ENCODE measurements at regions of chr7 and their contacts with region 1.

Region 1: DNA sequence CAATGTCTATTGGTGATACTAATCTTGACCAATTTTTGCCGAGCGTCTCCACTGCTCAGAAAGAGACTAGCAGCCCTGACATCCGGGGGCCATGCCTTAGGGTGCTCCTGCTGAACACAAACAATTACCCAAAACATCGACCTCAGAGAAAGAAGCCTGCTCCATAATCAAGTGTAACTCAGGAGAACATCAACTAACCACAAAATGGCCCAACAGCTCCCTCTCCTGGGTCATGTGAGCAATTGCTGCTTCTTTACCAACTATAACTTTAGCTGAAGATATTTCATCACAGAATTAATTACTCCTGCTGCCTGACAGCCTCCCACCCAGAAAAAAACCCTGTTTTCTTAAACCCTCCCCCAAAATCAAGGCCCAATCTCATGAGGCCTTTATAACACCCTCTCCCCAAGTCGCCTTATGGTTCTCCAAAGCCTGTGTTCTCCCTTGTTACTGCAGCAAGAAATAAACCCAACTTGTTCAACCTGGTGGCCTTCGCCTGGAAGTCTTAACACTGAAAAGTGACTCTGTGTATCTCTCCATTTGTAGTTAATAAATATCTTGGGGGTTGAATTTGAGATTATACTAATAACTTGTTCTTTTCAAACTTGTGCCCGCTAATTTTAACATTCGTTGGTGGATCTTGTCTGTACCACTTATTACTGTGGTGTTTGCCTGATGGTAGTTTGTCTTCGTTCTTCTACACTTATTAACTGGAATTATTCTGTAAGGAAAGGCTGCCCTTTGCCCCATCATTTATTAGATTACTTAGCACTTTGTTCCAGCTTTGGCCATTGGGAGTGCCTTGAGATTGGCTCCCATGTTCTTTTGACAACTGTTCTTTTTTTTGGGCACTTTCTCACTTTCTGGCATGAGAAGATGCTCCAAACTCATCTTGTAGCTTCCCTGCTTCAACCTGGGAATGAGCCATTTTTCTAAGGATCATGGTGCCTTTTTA is 21.2 kb upstream of the RAMP3 start:
- DNase-seq: peak; percentile 90
- H3K4me3 Mint-ChIP-seq: no peak overlapping the region
- H3K27ac Mint-ChIP-seq: no peak overlapping the region
- H3K4me1 Mint-ChIP-seq: peaks cover 10% of the 10 kb centered on the region
- H3K27me3 Mint-ChIP-seq: peaks cover 27% of the 10 kb centered on the region
- CTCF ChIP-seq: peak; percentile 86

Region 2: GRCh38 chr7:44858161-44858560 is 278.2 kb before region 1 on chr7:
- CTCF ChIA-PET with region 1: interaction called, 50 read pairs
- POLR2A ChIA-PET with region 1: interaction called, 5 read pairs
- intact Hi-C with region 1: loop called (anchors 1 kb)
- DNase-seq: no peak
- H3K4me3 Mint-ChIP-seq: no peak overlapping the region
- H3K27ac Mint-ChIP-seq: no peak overlapping the region
- H3K4me1 Mint-ChIP-seq: no peaks in the 10 kb centered on the region
- H3K27me3 Mint-ChIP-seq: no peaks in the 10 kb centered on the region
- CTCF ChIP-seq: no peak

Region 3: DNA sequence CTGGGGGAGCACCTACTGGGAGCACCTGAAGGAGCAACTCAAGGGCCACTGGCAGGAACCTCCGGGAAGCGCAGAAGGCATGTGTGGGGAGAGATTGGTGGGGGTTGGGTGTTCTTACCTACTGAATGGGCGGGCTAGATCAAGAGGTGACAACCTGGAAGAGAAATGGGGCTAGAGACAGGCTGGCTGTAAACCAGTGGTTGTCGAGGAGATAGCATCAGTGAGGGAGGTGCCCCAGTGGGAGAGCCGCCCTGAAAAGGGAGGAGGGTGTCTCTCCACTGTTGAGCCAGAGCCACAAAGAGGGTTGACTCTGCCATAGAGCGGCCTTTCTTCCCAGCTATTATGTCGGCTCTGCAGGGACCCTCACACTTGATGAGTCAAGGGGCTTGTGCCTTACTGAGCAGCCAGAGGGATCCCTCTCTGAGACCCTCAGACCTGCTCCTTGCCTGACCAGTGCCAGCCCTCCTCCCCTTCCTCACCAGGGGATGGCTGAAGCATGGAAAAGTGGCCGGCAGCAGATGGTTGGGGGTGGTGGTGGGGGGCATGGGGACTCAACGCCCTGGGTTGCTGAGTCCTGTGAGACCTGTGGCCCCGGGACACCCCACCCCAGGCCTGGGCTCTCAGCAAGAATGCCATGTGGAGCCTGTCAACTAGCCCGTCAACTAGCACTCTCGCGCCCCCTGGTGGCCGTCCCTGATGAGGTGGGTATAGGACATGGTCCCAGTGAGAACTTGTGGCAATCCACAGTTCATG is 214.6 kb before region 1 on chr7:
- CTCF ChIA-PET with region 1: interaction called, 3 read pairs
- POLR2A ChIA-PET with region 1: no interaction called
- intact Hi-C with region 1: loop called (anchors 5 kb)
- DNase-seq: peak; percentile 81
- H3K4me3 Mint-ChIP-seq: no peak overlapping the region
- H3K27ac Mint-ChIP-seq: no peak overlapping the region
- H3K4me1 Mint-ChIP-seq: no peaks in the 10 kb centered on the region
- H3K27me3 Mint-ChIP-seq: no peaks in the 10 kb centered on the region
- CTCF ChIP-seq: peak; percentile 82

Region 4: DNA sequence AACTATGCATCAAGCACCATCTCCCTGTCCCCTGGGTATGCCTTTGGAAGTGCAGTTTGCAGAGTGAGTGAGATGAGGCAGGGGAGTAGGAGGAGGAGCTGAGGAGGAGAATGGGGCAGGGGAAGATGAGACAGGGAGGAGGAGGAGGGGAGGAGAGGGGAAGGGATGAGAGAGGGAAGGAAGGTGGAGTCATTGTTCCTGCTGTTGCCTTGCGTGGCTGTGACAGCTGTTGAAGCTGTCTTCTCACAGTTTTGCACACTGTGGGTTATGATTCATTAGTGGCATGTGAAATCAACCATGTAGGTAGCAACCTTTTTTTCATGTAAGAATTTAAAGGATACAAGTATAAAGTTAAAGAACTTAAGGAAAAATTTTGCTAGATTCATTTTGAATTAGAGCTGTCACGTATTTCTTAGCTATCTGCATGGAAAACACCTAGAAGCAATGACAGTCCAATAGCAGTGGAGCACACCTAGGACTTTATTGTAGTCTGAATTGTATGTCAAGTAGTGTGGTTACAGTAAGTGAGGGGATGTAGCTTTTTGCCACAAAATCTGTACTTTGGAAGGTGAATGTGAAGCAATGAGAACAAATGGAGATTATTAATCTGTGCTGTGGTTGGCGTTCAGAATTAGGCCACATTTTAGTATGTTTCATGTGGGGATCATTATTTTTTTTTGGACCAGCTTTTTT is 114.6 kb before region 1 on chr7:
- CTCF ChIA-PET with region 1: no interaction called
- POLR2A ChIA-PET with region 1: no interaction called
- intact Hi-C with region 1: no loop called
- DNase-seq: no peak
- H3K4me3 Mint-ChIP-seq: no peak overlapping the region
- H3K27ac Mint-ChIP-seq: peak overlapping the region; percentile 28
- H3K4me1 Mint-ChIP-seq: peaks cover 8% of the 10 kb centered on the region
- H3K27me3 Mint-ChIP-seq: no peaks in the 10 kb centered on the region
- CTCF ChIP-seq: no peak

Region 5: DNA sequence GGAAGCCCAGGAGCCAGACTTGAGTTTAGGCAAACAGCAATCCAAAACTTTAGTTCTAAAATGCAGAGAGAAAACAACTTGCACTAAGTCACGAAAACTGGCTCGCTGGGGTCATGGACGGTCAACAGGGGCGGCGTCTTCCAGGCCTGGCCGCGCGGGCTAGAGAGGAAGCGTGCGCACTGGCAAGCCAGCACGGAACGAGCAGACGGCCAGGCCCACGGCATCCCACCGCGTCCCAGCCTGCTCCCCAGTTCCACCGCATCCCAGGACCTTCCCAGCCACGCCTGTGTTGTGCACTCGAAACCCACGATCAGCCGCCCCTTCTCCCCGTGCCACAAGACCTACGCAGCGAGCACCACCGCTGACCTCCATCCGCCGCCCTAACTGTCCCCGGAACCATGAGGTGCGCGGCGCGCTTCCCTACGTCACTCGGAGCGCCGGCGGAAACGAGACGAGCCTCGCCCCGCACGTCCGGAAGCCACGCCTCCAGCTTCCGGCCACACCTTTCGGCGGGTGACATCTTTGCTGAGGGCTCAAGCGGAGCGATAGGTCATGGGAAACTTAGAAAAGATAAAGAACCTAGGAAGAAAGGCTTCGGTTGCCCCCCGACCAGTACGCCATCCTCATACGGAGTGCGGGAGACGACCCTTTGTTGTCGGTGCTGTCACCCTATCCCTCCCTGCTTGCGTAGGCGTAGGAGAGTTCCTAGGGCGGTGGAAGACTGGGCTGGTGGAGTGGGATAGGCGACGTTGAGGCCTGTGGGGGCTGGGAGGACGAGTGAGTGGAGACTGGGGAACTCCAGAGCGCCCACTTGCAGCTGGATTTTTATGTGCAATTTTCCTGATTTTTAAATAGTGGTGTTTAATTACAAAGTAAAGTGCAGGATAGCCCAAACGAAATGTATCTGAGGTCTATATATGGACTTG is 24.8 kb before region 1 on chr7 and contains the start of gene TBRG4:
- CTCF ChIA-PET with region 1: interaction called, 26 read pairs
- POLR2A ChIA-PET with region 1: interaction called, 6 read pairs
- intact Hi-C with region 1: no loop called
- DNase-seq: peak; percentile 94
- H3K4me3 Mint-ChIP-seq: peak within 1 kb of the TSS; percentile 91
- H3K27ac Mint-ChIP-seq: peak within 1 kb of the TSS; percentile 97
- H3K4me1 Mint-ChIP-seq: peaks cover 19% of the 10 kb centered on the region
- H3K27me3 Mint-ChIP-seq: no peaks in the 10 kb centered on the region
- CTCF ChIP-seq: no peak
- total RNA-seq, gene TBRG4: 77.2 and 85.7 TPM in 2 replicates